ENCODE measurements at regions of chr5 and their contacts with region 1.

Region 1: DNA sequence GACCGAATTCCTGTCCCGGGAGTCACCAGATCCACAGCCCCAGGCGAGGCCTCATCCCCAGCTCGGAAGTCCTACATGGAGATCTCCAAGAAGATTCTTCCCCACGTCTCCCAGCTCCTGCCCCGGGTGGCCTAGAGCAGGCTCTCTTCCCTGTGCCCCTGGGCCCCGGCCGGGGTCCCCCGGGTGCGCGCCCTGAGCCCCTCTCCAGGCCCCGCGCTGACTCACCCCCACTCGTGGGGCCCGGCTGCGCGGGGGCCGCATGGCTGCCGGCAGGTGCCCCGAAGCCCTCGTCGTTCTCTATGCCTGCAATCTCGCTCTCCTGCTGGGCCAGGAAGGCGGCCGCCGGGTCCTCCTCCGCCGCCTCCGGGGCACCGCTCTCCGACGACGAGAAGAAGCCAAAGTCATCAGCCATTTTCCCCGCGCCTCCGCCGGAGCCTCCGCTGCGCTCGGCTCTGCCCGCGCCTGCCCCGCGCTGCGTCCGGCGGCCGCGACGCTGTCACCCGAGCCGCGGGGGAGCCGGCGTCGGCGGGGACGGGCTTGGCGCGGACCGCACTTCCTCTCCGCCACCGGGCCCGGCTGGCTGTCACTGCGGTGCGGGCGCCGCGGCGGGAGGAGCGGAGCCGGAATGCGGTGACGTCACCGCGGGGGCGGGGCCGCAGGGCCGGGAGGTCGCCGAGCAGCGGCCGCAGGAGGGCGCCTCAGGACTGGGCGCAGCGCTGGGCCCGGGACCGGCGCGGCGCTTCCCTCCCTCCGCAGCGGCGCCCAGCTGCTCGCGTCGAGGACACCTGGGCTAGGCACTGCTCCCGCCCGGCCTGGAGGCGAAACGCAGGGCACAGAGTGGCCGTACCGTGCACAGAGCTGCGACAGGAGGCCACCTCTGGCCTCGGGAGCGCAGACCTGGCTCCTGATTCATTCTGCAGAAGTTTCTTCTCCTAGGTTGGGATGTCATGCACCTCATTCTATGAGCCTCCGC is at the start of gene CLTB:
- DNase-seq: peak; percentile 91
- H3K4me3 Mint-ChIP-seq: peak within 1 kb of the TSS; percentile 83
- H3K27ac Mint-ChIP-seq: peak within 1 kb of the TSS; percentile 73
- H3K4me1 Mint-ChIP-seq: peaks cover 51% of the 10 kb centered on the region
- H3K27me3 Mint-ChIP-seq: no peaks in the 10 kb centered on the region
- CTCF ChIP-seq: peak; percentile 90
- total RNA-seq, gene CLTB: 333 and 339 TPM in 2 replicates

Region 2: GRCh38 chr5:176388444-176389134 is 27.6 kb before region 1 on chr5 and contains the starts of genes HIGD2A and NOP16:
- CTCF ChIA-PET with region 1: interaction called, 5 read pairs
- POLR2A ChIA-PET with region 1: interaction called, 110 read pairs
- intact Hi-C with region 1: no loop called
- DNase-seq: peak; percentile 100
- H3K4me3 Mint-ChIP-seq: peak within 1 kb of the TSS; percentile 98
- H3K27ac Mint-ChIP-seq: peak within 1 kb of the TSS; percentile 99
- H3K4me1 Mint-ChIP-seq: peaks cover 22% of the 10 kb centered on the region
- H3K27me3 Mint-ChIP-seq: no peaks in the 10 kb centered on the region
- CTCF ChIP-seq: no peak
- total RNA-seq, gene HIGD2A: 167 and 196 TPM in 2 replicates
- total RNA-seq, gene NOP16: 90.9 and 134 TPM in 2 replicates

Region 3: GRCh38 chr5:176429972-176430371 is 13.7 kb after region 1 on chr5:
- CTCF ChIA-PET with region 1: interaction called, 13 read pairs
- POLR2A ChIA-PET with region 1: interaction called, 4 read pairs
- intact Hi-C with region 1: no loop called
- DNase-seq: no peak
- H3K4me3 Mint-ChIP-seq: no peak overlapping the region
- H3K27ac Mint-ChIP-seq: no peak overlapping the region
- H3K4me1 Mint-ChIP-seq: peaks cover 11% of the 10 kb centered on the region
- H3K27me3 Mint-ChIP-seq: no peaks in the 10 kb centered on the region
- CTCF ChIP-seq: no peak

Region 4: DNA sequence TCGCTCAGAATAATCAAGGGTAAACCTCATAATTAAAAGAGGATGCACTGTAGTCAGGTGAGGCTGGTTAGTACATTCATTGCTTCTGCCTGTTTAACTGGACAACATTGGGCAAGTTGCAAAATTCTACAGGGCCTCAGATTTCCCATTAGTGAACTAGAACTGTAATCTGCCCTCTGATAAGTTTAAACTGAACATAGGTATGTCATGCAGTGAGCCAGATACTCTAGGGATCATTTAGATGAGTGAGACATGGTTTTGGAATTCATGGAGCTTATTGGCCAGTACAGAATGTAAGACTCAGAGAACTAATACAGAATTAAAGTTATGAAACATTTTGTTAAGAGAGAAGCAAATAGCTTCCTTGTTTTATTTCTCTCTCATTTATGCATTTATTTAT is 85.1 kb after region 1 on chr5:
- CTCF ChIA-PET with region 1: interaction called, 5 read pairs
- POLR2A ChIA-PET with region 1: interaction called, 5 read pairs
- intact Hi-C with region 1: loop called (anchors 2 kb)
- DNase-seq: no peak
- H3K4me3 Mint-ChIP-seq: no peak overlapping the region
- H3K27ac Mint-ChIP-seq: no peak overlapping the region
- H3K4me1 Mint-ChIP-seq: peaks cover 6% of the 10 kb centered on the region
- H3K27me3 Mint-ChIP-seq: no peaks in the 10 kb centered on the region
- CTCF ChIP-seq: no peak

Region 5: DNA sequence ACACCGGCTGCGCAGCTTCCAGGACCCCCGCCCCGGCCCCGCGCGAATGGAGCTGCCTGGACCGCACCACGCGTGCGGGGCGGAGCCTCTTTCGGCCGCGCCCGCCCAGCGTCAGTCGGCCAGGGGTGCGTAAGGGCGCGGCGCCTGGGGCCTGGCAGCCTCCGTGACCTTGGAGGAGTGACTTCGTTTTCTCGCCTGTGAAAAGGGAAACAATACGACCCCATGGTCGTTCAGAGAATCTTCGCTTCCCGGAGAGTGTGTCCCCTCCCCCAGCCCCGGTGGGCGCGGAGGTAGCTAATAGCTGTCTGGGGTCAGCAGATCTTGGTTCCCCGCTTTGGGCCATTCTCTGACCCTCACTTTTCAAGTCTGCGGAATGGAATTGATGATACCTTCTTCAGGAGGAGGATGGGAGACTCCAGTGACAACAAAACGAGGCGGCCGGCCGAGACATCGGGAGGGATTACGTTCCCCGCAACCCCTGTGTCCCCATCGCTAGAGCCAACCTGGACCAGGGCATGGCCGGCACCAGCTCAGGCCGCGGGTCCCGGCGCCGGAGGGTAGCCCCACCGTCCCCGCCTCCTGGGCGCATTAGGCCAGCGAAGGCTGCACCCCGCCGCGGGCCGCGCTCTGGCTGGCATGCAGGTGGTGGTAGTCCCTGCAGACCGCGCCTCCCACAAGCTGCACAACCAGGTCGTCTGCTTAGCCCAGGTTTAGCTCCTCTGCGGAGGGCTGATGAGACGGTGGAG is 127.4 kb after region 1 on chr5:
- CTCF ChIA-PET with region 1: interaction called, 32 read pairs
- POLR2A ChIA-PET with region 1: interaction called, 134 read pairs
- intact Hi-C with region 1: no loop called
- DNase-seq: peak; percentile 75
- H3K4me3 Mint-ChIP-seq: peak overlapping the region; percentile 82
- H3K27ac Mint-ChIP-seq: peak overlapping the region; percentile 50
- H3K4me1 Mint-ChIP-seq: peaks cover 30% of the 10 kb centered on the region
- H3K27me3 Mint-ChIP-seq: no peaks in the 10 kb centered on the region
- CTCF ChIP-seq: no peak

Region 6: DNA sequence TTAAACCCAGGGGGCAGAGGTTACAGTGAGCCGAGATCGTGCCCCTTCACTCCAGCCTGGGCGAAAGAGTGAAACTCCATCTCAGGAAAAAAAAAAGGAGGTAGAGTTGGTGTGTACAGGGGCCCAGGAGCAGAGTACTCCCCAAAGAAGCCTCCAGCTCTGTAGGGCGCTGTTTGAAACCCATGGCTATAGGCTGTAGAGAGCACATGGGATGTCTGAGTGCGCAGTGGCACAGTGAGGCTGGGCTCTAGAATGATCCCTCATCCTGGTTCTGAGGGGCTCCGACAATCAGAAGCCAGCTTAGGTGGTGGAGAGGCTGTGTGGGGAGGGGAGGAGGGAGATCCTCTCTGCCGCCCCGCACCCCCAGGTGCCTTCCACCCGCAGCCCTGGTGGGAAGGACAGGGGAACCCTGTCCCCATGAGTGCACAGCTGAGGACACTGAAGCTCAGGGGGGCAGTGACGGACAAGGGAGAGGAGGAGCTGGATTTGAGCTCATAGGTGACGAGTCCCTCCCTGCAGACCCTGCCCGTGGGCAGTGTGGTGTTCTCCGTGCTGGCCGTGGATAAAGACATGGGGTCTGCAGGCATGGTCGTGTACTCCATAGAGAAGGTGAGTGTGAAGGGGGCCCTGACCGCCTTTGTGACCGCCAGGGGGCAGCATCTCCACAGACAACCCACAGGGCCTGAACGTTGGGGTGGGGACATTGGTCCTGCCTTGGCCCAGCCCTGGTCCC is 157.5 kb after region 1 on chr5:
- CTCF ChIA-PET with region 1: interaction called, 33 read pairs
- POLR2A ChIA-PET with region 1: interaction called, 14 read pairs
- intact Hi-C with region 1: loop called (anchors 1 kb)
- DNase-seq: peak; percentile 77
- H3K4me3 Mint-ChIP-seq: no peak overlapping the region
- H3K27ac Mint-ChIP-seq: no peak overlapping the region
- H3K4me1 Mint-ChIP-seq: peaks cover 14% of the 10 kb centered on the region
- H3K27me3 Mint-ChIP-seq: peaks cover 18% of the 10 kb centered on the region
- CTCF ChIP-seq: peak; percentile 94